Prostate gland (tissue), 2 donors: ENCODE measurements at regions of chr16 and their contacts with region 1.

Region 1: GRCh38 chr16:4506450-4506849 is 30.3 kb downstream of the HMOX2 start:
- DNase-seq: peak; percentile 71
- H3K4me3 ChIP-seq: no peak overlapping the region
- H3K27ac ChIP-seq: no peak overlapping the region
- H3K4me1 ChIP-seq: peaks cover 2% of the 10 kb centered on the region
- H3K27me3 ChIP-seq: no peaks in the 10 kb centered on the region
- CTCF ChIP-seq: peak; percentile 53 to 88 (median 82)
- POLR2A ChIP-seq: no peak

Region 2: DNA sequence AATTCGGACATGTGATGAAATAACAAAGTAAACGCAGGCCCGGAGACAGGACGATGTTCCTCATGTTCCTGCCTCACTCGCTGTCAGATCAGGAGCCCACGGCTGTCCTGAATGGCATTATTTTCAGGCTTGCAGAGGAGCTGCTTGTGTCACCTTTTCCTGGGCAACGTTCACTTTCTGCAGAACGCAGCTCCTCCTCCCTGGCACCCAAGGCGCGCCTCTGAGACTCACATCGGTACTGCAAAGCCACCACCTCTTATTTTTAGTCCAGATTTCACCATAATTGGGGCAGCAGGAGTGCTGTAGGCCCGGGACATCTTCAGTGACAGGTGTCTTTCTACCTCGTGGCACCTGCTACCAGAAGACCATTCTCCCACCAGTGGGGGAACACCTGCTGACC is 41.7 kb after region 1 on chr16:
- intact Hi-C with region 1: loop called (anchors 2 kb)
- DNase-seq: no peak
- H3K4me3 ChIP-seq: no peak overlapping the region
- H3K27ac ChIP-seq: no peak overlapping the region
- H3K4me1 ChIP-seq: no peaks in the 10 kb centered on the region
- H3K27me3 ChIP-seq: no peaks in the 10 kb centered on the region
- CTCF ChIP-seq: no peak
- POLR2A ChIP-seq: no peak

Region 3: GRCh38 chr16:4586291-4586690 is 79.8 kb after region 1 on chr16:
- intact Hi-C with region 1: loop called (anchors 5 kb)
- DNase-seq: no peak
- H3K4me3 ChIP-seq: no peak overlapping the region
- H3K27ac ChIP-seq: no peak overlapping the region
- H3K4me1 ChIP-seq: no peaks in the 10 kb centered on the region
- H3K27me3 ChIP-seq: no peaks in the 10 kb centered on the region
- CTCF ChIP-seq: no peak
- POLR2A ChIP-seq: no peak

Region 4: GRCh38 chr16:4892361-4893102 is 386.1 kb after region 1 on chr16:
- intact Hi-C with region 1: no loop called
- DNase-seq: no peak
- H3K4me3 ChIP-seq: no peak overlapping the region
- H3K27ac ChIP-seq: no peak overlapping the region
- H3K4me1 ChIP-seq: peaks cover 3% of the 10 kb centered on the region
- H3K27me3 ChIP-seq: no peaks in the 10 kb centered on the region
- CTCF ChIP-seq: no peak
- POLR2A ChIP-seq: no peak